Uterus (tissue), 4 donors: ENCODE measurements at regions of chr2 and their contacts with region 1.

Region 1: GRCh38 chr2:46803911-46804670 is 111.5 kb downstream of the MCFD2 start:
- DNase-seq: no peak
- H3K4me3 ChIP-seq: no peak overlapping the region
- H3K27ac ChIP-seq: no peak overlapping the region
- H3K4me1 ChIP-seq: no peaks in the 10 kb centered on the region
- H3K27me3 ChIP-seq: no peaks in the 10 kb centered on the region
- CTCF ChIP-seq: no peak
- POLR2A ChIP-seq: no peak

Region 2: DNA sequence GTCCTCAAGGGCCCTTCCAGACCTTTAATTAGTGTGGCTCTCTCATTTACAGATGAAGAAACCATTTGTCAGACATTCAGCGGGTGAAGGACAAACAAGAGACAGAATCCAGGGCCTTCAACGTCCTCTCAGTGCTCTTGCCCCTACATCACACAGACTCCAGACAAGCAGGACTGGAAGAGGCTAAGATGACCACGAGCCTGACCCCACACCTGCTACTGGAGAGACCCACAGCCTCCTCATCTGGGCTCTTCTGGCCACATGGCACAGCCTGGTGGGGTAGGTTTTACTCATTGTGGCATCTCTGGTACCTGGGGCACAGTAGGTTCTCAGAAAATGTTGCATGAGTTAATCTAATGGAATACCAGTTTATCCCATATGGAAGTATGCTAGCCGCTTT is 394.3 kb before region 1 on chr2:
- intact Hi-C with region 1: no loop called
- DNase-seq: no peak
- H3K4me3 ChIP-seq: no peak overlapping the region
- H3K27ac ChIP-seq: no peak overlapping the region
- H3K4me1 ChIP-seq: no peaks in the 10 kb centered on the region
- H3K27me3 ChIP-seq: no peaks in the 10 kb centered on the region
- CTCF ChIP-seq: no peak
- POLR2A ChIP-seq: no peak

Region 3: GRCh38 chr2:46632349-46632748 is 171.7 kb before region 1 on chr2:
- intact Hi-C with region 1: no loop called
- DNase-seq: no peak
- H3K4me3 ChIP-seq: no peak overlapping the region
- H3K27ac ChIP-seq: no peak overlapping the region
- H3K4me1 ChIP-seq: no peaks in the 10 kb centered on the region
- H3K27me3 ChIP-seq: no peaks in the 10 kb centered on the region
- CTCF ChIP-seq: peak; percentile 50 to 74 (median 58)
- POLR2A ChIP-seq: no peak

Region 4: DNA sequence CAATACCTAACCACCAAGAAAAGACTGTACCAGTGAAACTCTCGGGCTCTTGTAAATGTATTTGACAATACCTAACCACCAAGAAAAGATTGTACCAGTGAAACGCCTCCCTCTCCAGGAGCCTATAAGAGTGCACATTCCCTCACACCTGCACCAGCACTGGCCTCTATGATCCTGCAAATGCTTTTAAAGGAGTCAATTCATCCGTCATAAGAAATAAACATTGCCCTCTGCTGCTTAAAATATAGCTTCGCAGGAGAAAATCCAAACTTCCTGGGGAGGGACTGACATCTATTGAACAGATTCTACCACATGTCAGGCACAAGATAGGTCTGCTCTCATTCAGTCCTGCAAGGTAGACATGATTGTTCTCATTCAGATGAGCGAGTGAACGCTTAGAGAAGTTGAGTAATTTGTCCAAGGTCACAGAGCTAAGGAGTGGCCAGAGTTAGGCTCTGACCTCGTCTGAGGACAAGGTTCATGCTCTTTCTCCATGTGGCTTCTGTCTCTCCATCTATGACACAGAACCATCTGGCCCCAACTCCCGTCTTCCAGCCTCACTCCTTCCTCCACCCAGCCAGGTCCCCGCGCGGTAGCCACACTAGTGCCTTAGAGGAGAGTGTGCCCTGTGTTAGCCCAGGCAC is 72.8 kb after region 1 on chr2:
- intact Hi-C with region 1: loop called (anchors 10 kb)
- DNase-seq: peak in 1 of 2 donors; percentile 24
- H3K4me3 ChIP-seq: no peak overlapping the region
- H3K27ac ChIP-seq: peak overlapping the region; percentile 14 to 17
- H3K4me1 ChIP-seq: peaks cover 4 to 30% of the 10 kb centered on the region in 2 donors
- H3K27me3 ChIP-seq: no peaks in the 10 kb centered on the region
- CTCF ChIP-seq: peak; percentile 48 to 74 (median 69)
- POLR2A ChIP-seq: no peak

Region 5: GRCh38 chr2:46925545-46926351 is 121.7 kb after region 1 on chr2:
- intact Hi-C with region 1: no loop called
- DNase-seq: no peak
- H3K4me3 ChIP-seq: no peak overlapping the region
- H3K27ac ChIP-seq: no peak overlapping the region
- H3K4me1 ChIP-seq: no peaks in the 10 kb centered on the region
- H3K27me3 ChIP-seq: no peaks in the 10 kb centered on the region
- CTCF ChIP-seq: no peak
- POLR2A ChIP-seq: no peak

Region 6: GRCh38 chr2:47174733-47175361 is 370.8 kb after region 1 on chr2:
- intact Hi-C with region 1: no loop called
- DNase-seq: peak in 1 of 2 donors; percentile 57
- H3K4me3 ChIP-seq: peak overlapping the region; percentile 71 to 93
- H3K27ac ChIP-seq: peak overlapping the region; percentile 99
- H3K4me1 ChIP-seq: no peaks in the 10 kb centered on the region
- H3K27me3 ChIP-seq: no peaks in the 10 kb centered on the region
- CTCF ChIP-seq: no peak
- POLR2A ChIP-seq: no peak